ENCODE measurements at regions of chr9 and their contacts with region 1.

Region 1: DNA sequence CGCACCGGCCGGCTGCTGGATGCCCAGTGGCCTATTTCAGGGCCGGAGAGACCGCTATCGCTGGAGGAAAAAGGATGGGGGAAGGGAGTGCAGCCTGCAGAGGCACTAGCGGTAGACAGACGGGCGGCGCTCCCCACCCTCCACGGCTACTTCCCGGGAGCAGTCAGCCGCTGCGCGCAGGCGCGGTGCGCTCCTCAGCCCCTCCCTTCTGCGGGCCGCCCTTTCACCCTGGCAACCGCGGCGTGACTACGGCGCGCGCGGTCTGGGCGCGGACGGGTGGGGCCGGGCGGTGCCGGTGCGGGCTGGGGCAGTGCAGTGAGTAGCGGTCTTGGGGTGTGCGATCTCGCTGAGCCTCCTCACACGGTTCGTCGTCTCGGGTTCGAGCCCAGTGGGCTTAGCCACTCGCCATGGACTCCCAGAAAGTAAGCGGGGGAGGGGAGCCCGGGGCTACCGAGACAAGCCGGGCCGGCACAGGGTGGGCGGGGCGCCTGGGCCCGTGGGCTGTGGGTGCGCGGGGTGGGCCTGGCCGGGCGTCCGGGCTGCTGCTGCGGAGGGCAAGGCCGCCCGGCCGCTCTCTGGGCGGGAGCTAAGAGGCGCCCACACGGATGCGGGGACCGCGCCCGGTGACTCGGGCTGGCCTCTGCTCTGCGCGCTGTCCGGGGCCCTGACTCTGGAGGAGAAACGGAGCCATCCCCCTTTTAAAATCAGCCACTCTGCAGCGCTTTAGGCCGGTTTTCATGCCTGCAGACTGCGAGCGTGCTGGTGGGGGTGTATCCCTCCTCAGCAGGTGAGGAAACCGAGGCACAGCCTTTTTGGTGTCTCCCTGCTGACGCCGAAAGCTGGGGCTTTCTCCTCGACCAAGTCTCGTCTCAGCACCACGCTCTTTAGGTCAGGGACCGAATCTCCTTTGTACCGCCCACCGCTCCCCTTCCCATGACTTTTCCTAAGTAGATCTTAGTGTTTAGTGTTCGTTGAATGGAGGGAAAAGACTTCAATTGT is at the start of gene FSD1L:
- H3K4me3 Mint-ChIP-seq: peak within 1 kb of the TSS; percentile 90
- H3K27ac Mint-ChIP-seq: peak within 1 kb of the TSS; percentile 85
- H3K4me1 Mint-ChIP-seq: peaks cover 35% of the 10 kb centered on the region
- H3K27me3 Mint-ChIP-seq: no peaks in the 10 kb centered on the region

Region 2: DNA sequence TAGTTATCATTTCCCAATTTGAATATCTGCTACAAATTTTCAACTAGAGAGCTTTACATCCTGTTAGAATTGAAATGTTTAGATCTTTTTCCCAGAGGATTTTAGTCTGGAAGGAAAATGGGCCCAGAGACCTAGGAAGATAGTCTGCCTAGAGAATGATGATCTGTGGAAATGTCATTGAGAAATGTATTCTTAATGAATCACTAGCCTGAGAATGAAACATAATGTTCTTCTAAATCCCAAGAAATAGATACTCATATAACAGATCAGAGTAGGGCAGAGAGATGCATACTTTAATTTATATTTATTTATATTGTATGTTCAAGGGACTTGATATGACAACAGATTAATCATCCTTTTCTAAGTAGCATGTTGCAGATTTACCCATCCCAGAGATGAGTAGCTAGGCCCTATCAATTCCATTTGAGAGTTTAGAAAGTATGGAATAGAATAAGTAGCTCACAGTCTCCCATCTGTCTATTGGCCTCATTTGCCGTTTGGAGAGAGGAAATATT is 228.8 kb before region 1 on chr9:
- intact Hi-C with region 1: no loop called
- H3K4me3 Mint-ChIP-seq: no peak overlapping the region
- H3K27ac Mint-ChIP-seq: no peak overlapping the region
- H3K4me1 Mint-ChIP-seq: peaks cover 2% of the 10 kb centered on the region
- H3K27me3 Mint-ChIP-seq: no peaks in the 10 kb centered on the region

Region 3: GRCh38 chr9:105425841-105426436 is 22.2 kb before region 1 on chr9:
- intact Hi-C with region 1: loop called (anchors 1 kb)
- H3K4me3 Mint-ChIP-seq: no peak overlapping the region
- H3K27ac Mint-ChIP-seq: no peak overlapping the region
- H3K4me1 Mint-ChIP-seq: no peaks in the 10 kb centered on the region
- H3K27me3 Mint-ChIP-seq: no peaks in the 10 kb centered on the region

Region 4: DNA sequence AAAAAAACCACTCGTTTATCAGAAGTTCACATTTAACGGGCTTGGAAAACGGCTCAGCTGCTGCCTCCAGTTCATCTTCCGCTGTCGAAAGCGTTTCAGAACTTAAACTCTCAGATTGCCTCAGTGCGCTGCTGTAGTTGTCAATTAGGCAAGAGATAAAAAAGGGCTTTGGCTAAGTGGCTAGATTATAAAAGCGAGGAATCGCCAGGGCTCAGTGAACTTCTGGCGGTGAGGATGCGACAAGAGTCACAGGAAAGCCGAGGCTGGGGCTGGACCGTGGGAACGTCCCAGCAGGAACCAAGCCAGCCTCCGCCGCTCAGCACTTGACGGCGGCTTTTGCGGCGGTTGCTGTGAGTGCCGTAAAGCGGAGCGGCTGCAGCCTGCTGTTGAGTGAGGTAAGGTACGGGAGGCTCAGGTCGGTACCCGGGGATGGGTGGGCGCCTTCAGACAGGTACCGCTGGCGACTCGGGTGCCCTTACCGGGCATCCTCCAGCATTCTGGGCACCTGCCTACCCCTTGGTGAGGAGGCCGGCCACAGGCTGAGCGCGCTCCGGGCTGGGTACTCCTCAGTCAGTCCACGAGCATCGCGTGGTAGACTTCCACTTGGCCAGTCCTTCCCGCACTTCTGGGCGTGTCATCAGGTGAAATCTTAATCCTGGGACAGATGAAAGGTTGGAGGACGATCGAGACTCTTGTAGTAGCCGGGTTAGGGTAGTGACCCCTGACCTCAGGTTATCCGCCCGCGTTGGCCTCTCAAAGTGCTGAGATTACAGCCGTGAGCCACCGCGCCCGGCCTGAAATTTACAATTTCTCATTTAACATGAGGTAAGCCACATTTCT is 109.9 kb after region 1 on chr9 and contains the start of gene FKTN:
- intact Hi-C with region 1: loop called (anchors 10 kb)
- H3K4me3 Mint-ChIP-seq: peak within 1 kb of the TSS; percentile 92
- H3K27ac Mint-ChIP-seq: peak within 1 kb of the TSS; percentile 75
- H3K4me1 Mint-ChIP-seq: peaks cover 15% of the 10 kb centered on the region
- H3K27me3 Mint-ChIP-seq: no peaks in the 10 kb centered on the region

Region 5: GRCh38 chr9:105694190-105694847 is 246.2 kb after region 1 on chr9 and contains the start of gene TMEM38B:
- intact Hi-C with region 1: loop called (anchors 10 kb)
- H3K4me3 Mint-ChIP-seq: peak within 1 kb of the TSS; percentile 76
- H3K27ac Mint-ChIP-seq: peak within 1 kb of the TSS; percentile 43
- H3K4me1 Mint-ChIP-seq: peaks cover 16% of the 10 kb centered on the region
- H3K27me3 Mint-ChIP-seq: peaks cover 2% of the 10 kb centered on the region

Measured in dendritic cell treated with granulocyte-macrophage colony-stimulating factor and Interleukin-4, amounts not matched to agents 40 ng/mL and 50 ng/mL, for 4 days (primary cell).